Activated CD4-positive, alpha-beta T cell treated with anti-CD3 and anti-CD28 coated beads for 36 hours (primary cell): ENCODE measurements at regions of chr4 and their contacts with region 1.

Region 1: DNA sequence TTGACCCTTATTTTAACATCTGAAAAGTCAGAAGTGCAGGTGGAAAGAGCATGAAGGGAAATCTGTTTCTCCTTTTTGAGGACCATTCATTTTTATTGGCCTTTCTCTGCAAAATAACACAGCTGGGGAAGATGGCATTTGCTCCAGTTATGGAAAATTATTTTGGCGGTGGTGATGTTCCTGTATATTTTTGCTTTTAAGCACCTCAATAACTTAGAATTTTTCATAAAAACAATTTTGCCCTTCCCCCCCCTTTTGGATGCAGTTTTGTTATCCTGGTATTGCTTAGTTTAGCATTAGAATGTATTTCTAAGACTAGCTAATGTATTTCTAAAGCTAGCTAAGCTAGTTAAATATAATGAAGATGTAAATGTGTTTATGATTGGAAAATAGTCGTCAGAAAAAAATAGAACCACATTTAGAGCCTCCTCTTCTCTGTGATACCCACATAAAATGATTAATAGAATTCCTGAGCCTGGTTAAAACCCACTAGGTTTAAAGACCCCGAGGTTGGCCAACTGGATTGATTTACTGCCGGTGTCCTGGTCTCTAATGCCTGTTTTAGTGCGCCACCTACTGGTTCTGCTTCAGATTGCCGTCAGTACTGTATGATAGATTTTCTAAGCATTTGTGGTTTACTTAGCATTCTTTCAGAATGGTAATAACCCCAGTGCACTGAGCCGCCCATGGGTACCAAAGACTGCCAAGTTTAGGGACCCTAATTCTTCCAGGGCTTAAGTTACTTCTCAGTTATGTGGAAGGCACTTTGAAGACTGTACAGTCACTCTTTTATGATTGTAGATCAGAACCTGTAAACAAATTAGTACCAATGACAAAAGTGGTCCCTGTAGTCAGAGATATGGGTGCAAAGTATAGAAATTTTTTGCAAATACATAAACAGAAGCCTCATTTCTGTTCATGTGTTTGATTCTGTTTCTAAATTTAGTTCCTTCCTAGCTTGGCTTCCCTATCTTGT is 11.4 kb downstream of the KLF3 start:
- DNase-seq: peak; percentile 91
- ATAC-seq: peak; percentile 55
- H3K4me3 Mint-ChIP-seq: peak overlapping the region; percentile 47
- H3K27ac Mint-ChIP-seq: peak overlapping the region; percentile 30
- H3K4me1 Mint-ChIP-seq: peaks cover 84% of the 10 kb centered on the region
- H3K27me3 Mint-ChIP-seq: no peaks in the 10 kb centered on the region

Region 2: GRCh38 chr4:38319456-38320342 is 355.7 kb before region 1 on chr4:
- CTCF ChIA-PET with region 1: interaction called, 79 read pairs
- POLR2A ChIA-PET with region 1: interaction called, 3 read pairs
- intact Hi-C with region 1: loop called (anchors 1 kb)
- DNase-seq: peak; percentile 96
- ATAC-seq: peak; percentile 84
- H3K4me3 Mint-ChIP-seq: peak overlapping the region; percentile 68
- H3K27ac Mint-ChIP-seq: peak overlapping the region; percentile 78
- H3K4me1 Mint-ChIP-seq: peaks cover 50% of the 10 kb centered on the region
- H3K27me3 Mint-ChIP-seq: peaks cover 7% of the 10 kb centered on the region

Region 3: GRCh38 chr4:38503689-38504395 is 171.6 kb before region 1 on chr4:
- CTCF ChIA-PET with region 1: no interaction called
- POLR2A ChIA-PET with region 1: no interaction called
- intact Hi-C with region 1: no loop called
- DNase-seq: no peak
- ATAC-seq: no peak
- H3K4me3 Mint-ChIP-seq: no peak overlapping the region
- H3K27ac Mint-ChIP-seq: no peak overlapping the region
- H3K4me1 Mint-ChIP-seq: peaks cover 39% of the 10 kb centered on the region
- H3K27me3 Mint-ChIP-seq: peaks cover 5% of the 10 kb centered on the region

Region 4: GRCh38 chr4:38654273-38654672 is 21.2 kb before region 1 on chr4:
- CTCF ChIA-PET with region 1: interaction called, 11 read pairs
- POLR2A ChIA-PET with region 1: no interaction called
- intact Hi-C with region 1: no loop called
- DNase-seq: no peak
- ATAC-seq: peak; percentile 31
- H3K4me3 Mint-ChIP-seq: peak overlapping the region; percentile 25
- H3K27ac Mint-ChIP-seq: peak overlapping the region; percentile 15
- H3K4me1 Mint-ChIP-seq: peaks cover 47% of the 10 kb centered on the region
- H3K27me3 Mint-ChIP-seq: no peaks in the 10 kb centered on the region

Region 5: GRCh38 chr4:38687571-38688011 is 12.2 kb after region 1 on chr4:
- CTCF ChIA-PET with region 1: interaction called, 10 read pairs
- POLR2A ChIA-PET with region 1: no interaction called
- intact Hi-C with region 1: no loop called
- DNase-seq: peak; percentile 39
- ATAC-seq: peak; percentile 97
- H3K4me3 Mint-ChIP-seq: no peak overlapping the region
- H3K27ac Mint-ChIP-seq: peak overlapping the region; percentile 69
- H3K4me1 Mint-ChIP-seq: peaks cover 60% of the 10 kb centered on the region
- H3K27me3 Mint-ChIP-seq: no peaks in the 10 kb centered on the region